ENCODE measurements at regions of chr20 and their contacts with region 1.

Region 1: DNA sequence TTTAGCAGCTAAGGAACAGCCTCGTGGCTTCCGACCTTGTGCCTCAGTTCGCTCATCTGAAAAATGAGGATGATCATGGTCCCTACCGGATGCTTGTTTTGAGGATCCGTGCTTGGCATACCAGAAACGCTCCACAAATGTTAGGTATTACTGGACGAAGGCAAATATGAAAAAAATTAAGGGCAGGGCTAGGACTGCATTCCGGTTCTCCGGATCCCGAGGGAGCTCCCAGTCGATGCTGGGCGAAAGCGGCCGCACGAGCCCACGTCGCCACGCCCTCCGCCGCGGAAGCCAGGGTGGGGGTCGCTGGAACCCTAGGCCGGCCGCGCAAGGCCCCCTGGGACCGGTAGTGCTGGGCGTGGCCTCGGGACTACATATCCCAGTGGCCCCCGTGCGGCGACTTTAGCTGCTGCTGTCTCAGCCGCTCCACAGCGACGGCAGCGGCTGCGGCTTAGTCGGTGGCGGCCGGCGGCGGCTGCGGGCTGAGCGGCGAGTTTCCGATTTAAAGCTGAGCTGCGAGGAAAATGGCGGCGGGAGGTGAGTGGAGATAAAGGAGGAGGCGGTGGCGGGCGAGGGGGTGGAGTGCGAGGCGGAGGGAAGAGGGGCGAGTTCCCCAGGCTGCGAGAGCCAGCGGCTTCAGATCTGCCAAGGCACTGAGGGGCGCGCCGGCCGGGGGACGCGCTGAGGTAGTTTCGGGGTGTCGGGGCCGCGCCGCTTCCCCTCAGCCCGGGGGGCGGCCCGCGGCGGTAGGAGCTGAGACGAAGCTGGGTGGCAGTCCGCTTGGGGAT is at the start of gene NCOA3:
- DNase-seq: peak; percentile 77 to 94 (median 87)
- ATAC-seq: peak; percentile 81
- H3K4me3 ChIP-seq: peak within 1 kb of the TSS; percentile 99
- H3K4me3 Mint-ChIP-seq: peak within 1 kb of the TSS; percentile 100
- H3K27ac ChIP-seq: peak within 1 kb of the TSS; percentile 78 to 85
- H3K27ac Mint-ChIP-seq: peak within 1 kb of the TSS; percentile 94
- H3K4me1 ChIP-seq: peaks cover 25% of the 10 kb centered on the region
- H3K4me1 Mint-ChIP-seq: peaks cover 51% of the 10 kb centered on the region
- H3K27me3 ChIP-seq: no peaks in the 10 kb centered on the region
- H3K27me3 Mint-ChIP-seq: no peaks in the 10 kb centered on the region
- CTCF ChIP-seq: peak; percentile 48
- total RNA-seq, gene NCOA3: 59.9 to 65.4 TPM

Region 2: GRCh38 chr20:46715292-46715756 is 786.4 kb before region 1 on chr20:
- CTCF ChIA-PET with region 1: no interaction called
- POLR2A ChIA-PET with region 1: no interaction called
- intact Hi-C with region 1: no loop called
- DNase-seq: no peak
- ATAC-seq: no peak
- H3K4me3 ChIP-seq: no peak overlapping the region
- H3K4me3 Mint-ChIP-seq: no peak overlapping the region
- H3K27ac ChIP-seq: no peak overlapping the region
- H3K27ac Mint-ChIP-seq: no peak overlapping the region
- H3K4me1 ChIP-seq: no peaks in the 10 kb centered on the region
- H3K4me1 Mint-ChIP-seq: peaks cover under 1% of the 10 kb centered on the region
- H3K27me3 ChIP-seq: peaks cover 22 to 30% of the 10 kb centered on the region in 2 experiments
- H3K27me3 Mint-ChIP-seq: peaks cover 53% of the 10 kb centered on the region
- CTCF ChIP-seq: no peak

Region 3: DNA sequence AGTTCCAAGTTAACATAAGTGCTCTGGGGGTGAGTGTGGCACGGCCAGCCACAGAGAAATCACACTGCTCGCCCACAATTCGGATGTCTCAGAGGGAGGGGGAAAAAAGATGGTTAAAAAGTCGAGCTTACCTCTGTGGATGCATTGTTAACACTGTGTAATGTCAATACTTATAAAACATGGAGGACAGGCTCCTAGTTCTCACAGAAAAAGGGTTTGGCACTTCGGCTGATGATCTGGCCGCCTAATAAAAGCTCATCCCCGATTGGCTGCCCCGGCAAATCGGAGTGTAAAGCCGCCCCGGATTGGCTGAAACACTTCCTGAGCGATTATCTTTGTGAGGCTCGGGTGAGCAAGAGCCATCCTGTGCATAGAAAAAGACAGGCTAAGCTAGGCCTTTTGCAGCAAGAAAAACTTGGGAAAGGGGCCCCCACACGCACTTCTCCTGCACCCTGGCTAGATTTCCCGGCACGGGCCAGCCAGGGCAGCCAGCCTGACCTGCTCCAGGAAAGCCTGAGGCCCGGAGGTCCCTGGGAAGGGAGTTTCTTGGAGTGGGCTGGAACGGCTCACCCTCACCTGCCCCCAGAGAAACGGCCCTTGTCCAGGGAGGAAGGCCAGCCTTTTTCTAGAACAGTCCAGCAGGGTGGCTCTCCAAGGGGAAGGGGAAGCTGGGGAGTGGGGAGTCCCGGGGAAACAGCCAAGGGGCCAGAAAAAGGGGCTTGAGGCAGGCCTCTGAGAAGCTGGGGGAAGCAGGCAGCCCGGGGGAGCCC is 145.0 kb before region 1 on chr20 and contains the start of gene ZMYND8:
- CTCF ChIA-PET with region 1: no interaction called
- POLR2A ChIA-PET with region 1: interaction called, 44 read pairs
- intact Hi-C with region 1: loop called in 1 of 2 experiments (anchors 5 kb)
- DNase-seq: peak; percentile 87 to 100 (median 95)
- ATAC-seq: peak; percentile 88
- H3K4me3 ChIP-seq: peak within 1 kb of the TSS; percentile 61
- H3K4me3 Mint-ChIP-seq: peak within 1 kb of the TSS; percentile 93
- H3K27ac ChIP-seq: peak within 1 kb of the TSS; percentile 83 to 85
- H3K27ac Mint-ChIP-seq: no peak within 1 kb of the TSS
- H3K4me1 ChIP-seq: peaks cover 74% of the 10 kb centered on the region
- H3K4me1 Mint-ChIP-seq: peaks cover 55% of the 10 kb centered on the region
- H3K27me3 ChIP-seq: no peaks in the 10 kb centered on the region
- H3K27me3 Mint-ChIP-seq: no peaks in the 10 kb centered on the region
- CTCF ChIP-seq: no peak
- total RNA-seq, gene ZMYND8: 33.0 to 34.3 TPM

Region 4: GRCh38 chr20:47418061-47418912 is 83.4 kb before region 1 on chr20:
- CTCF ChIA-PET with region 1: no interaction called
- POLR2A ChIA-PET with region 1: interaction called, 8 read pairs
- intact Hi-C with region 1: loop called (anchors 5 kb)
- DNase-seq: no peak
- ATAC-seq: no peak
- H3K4me3 ChIP-seq: no peak overlapping the region
- H3K4me3 Mint-ChIP-seq: no peak overlapping the region
- H3K27ac ChIP-seq: no peak overlapping the region
- H3K27ac Mint-ChIP-seq: no peak overlapping the region
- H3K4me1 ChIP-seq: peaks cover 30% of the 10 kb centered on the region
- H3K4me1 Mint-ChIP-seq: peaks cover 29% of the 10 kb centered on the region
- H3K27me3 ChIP-seq: no peaks in the 10 kb centered on the region
- H3K27me3 Mint-ChIP-seq: no peaks in the 10 kb centered on the region
- CTCF ChIP-seq: no peak

Region 5: GRCh38 chr20:47487175-47487917 is 14.3 kb before region 1 on chr20:
- CTCF ChIA-PET with region 1: interaction called, 5 read pairs
- POLR2A ChIA-PET with region 1: interaction called, 48 read pairs
- intact Hi-C with region 1: loop called in 1 of 2 experiments (anchors 1 kb)
- DNase-seq: peak in 10 of 14 experiments; percentile 3 to 89 (median 31)
- ATAC-seq: peak; percentile 85
- H3K4me3 ChIP-seq: peak overlapping the region; percentile 19
- H3K4me3 Mint-ChIP-seq: peak overlapping the region; percentile 54
- H3K27ac ChIP-seq: peak overlapping the region; percentile 38 to 74
- H3K27ac Mint-ChIP-seq: peak overlapping the region; percentile 71
- H3K4me1 ChIP-seq: peaks cover 28% of the 10 kb centered on the region
- H3K4me1 Mint-ChIP-seq: peaks cover 28% of the 10 kb centered on the region
- H3K27me3 ChIP-seq: no peaks in the 10 kb centered on the region
- H3K27me3 Mint-ChIP-seq: no peaks in the 10 kb centered on the region
- CTCF ChIP-seq: no peak

Region 6: DNA sequence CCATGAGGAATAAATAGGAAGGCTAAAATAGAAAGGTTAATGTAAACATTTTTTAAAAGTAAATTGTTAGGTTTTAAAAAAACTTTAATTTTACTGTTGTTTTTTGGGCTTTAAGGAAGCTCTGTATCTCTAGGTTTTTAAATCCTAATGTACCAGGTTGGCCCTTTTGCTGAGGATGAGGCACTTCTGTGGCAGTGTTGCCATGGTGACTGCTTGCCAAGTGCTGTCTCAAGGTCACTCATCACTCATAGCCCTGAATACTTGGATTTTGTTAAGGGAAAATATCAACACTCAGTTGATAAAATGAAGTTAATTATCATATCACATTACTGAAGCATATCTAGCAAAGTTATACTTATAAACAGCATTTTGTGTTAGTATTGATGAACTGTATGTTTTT is 50.2 kb after region 1 on chr20:
- CTCF ChIA-PET with region 1: interaction called, 3 read pairs
- POLR2A ChIA-PET with region 1: no interaction called
- intact Hi-C with region 1: loop called in 1 of 2 experiments (anchors 10 kb)
- DNase-seq: no peak
- ATAC-seq: no peak
- H3K4me3 ChIP-seq: no peak overlapping the region
- H3K4me3 Mint-ChIP-seq: no peak overlapping the region
- H3K27ac ChIP-seq: no peak overlapping the region
- H3K27ac Mint-ChIP-seq: no peak overlapping the region
- H3K4me1 ChIP-seq: peaks cover 9% of the 10 kb centered on the region
- H3K4me1 Mint-ChIP-seq: peaks cover 46% of the 10 kb centered on the region
- H3K27me3 ChIP-seq: no peaks in the 10 kb centered on the region
- H3K27me3 Mint-ChIP-seq: no peaks in the 10 kb centered on the region
- CTCF ChIP-seq: no peak

Region 7: DNA sequence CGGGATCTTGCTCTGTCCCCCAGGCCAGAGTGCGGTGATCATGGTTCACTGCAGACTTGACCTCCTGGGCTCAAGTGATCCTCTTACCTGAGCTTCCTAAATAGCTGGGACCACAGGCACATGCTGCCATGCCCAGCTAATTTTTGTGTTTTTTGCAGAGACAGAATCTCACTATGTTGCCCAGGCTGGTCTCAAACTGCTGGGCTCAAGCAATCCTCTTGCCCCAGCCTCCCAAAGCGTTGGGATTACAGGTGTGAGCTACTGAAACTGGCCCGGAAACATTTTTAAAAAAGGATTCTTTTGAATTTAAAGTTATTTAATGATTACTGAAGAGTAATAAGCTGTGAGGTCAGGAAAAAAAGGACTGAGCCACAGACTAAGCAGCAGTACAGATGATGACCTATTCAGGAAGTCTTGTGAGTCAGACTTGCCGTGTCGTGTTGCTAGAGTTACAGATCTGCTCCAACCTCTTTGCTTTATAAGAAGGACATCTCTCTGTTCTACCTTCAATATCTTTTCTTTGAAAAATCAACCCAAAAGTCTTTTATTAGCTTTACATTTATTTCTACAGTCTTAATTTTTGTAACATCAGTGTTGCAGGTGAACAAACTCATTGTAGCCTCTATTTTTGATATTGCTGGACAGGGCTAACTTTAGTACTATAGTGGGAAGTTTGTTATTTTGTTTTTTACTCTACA is 108.7 kb after region 1 on chr20:
- CTCF ChIA-PET with region 1: interaction called, 6 read pairs
- POLR2A ChIA-PET with region 1: no interaction called
- intact Hi-C with region 1: loop called in 1 of 2 experiments (anchors 5 kb)
- DNase-seq: peak in 13 of 14 experiments; percentile 31 to 75 (median 46)
- ATAC-seq: peak; percentile 89
- H3K4me3 ChIP-seq: no peak overlapping the region
- H3K4me3 Mint-ChIP-seq: peak overlapping the region; percentile 22
- H3K27ac ChIP-seq: peak overlapping the region; percentile 46 to 65
- H3K27ac Mint-ChIP-seq: peak overlapping the region; percentile 81
- H3K4me1 ChIP-seq: peaks cover 27% of the 10 kb centered on the region
- H3K4me1 Mint-ChIP-seq: peaks cover 72% of the 10 kb centered on the region
- H3K27me3 ChIP-seq: no peaks in the 10 kb centered on the region
- H3K27me3 Mint-ChIP-seq: no peaks in the 10 kb centered on the region
- CTCF ChIP-seq: no peak

Region 8: DNA sequence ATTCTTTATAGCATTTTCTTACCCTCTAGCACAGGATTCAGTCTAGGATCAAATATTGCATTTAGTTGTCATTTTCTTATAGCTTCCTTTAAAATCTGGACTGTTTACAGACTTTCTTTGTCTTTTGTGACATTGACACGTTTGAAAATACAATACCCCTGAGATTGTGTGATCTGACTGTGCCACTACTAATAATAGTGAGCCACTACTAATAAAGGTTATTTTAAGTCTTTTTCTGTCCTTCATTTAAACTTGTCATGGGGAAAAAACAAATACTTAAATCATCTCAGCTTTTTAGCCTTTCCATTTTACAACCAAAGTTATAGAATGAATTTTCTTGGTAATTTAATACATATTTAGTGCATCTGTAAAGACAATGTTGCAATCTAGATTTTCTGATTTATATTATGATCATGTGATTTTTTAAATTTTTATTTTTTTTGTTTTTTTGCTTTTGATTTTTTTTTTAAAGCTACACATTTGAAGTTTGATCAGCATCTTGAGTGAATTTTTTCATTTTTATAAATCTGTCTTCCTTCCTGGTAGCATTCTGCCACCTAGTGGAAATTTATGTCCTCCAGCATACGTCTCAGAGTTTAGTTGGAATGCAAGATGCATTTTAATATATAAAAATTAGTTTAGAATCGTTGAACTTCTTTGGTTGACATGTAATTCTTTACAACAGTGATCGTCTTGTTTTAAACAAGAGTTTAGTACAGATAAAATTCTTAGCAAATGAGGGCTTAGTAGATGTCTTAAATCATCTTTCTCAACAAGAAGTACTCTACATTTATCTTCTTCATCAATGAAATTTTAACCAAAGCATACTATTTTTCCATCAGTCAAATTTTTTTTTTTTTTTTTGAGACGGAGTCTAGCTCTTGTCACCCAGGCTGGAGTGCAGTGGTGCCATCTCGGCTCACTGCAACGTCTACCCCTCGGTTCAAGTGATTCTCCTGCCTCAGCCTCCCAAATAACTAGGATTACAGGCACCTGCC is 119.4 kb after region 1 on chr20:
- CTCF ChIA-PET with region 1: interaction called, 13 read pairs
- POLR2A ChIA-PET with region 1: interaction called, 4 read pairs
- intact Hi-C with region 1: loop called in 1 of 2 experiments (anchors 5 kb)
- DNase-seq: peak in 4 of 14 experiments; percentile 27 to 73 (median 68)
- ATAC-seq: peak; percentile 52
- H3K4me3 ChIP-seq: no peak overlapping the region
- H3K4me3 Mint-ChIP-seq: no peak overlapping the region
- H3K27ac ChIP-seq: no peak overlapping the region
- H3K27ac Mint-ChIP-seq: peak overlapping the region; percentile 25
- H3K4me1 ChIP-seq: no peaks in the 10 kb centered on the region
- H3K4me1 Mint-ChIP-seq: peaks cover 23% of the 10 kb centered on the region
- H3K27me3 ChIP-seq: no peaks in the 10 kb centered on the region
- H3K27me3 Mint-ChIP-seq: no peaks in the 10 kb centered on the region
- CTCF ChIP-seq: peak; percentile 85

Region 9: DNA sequence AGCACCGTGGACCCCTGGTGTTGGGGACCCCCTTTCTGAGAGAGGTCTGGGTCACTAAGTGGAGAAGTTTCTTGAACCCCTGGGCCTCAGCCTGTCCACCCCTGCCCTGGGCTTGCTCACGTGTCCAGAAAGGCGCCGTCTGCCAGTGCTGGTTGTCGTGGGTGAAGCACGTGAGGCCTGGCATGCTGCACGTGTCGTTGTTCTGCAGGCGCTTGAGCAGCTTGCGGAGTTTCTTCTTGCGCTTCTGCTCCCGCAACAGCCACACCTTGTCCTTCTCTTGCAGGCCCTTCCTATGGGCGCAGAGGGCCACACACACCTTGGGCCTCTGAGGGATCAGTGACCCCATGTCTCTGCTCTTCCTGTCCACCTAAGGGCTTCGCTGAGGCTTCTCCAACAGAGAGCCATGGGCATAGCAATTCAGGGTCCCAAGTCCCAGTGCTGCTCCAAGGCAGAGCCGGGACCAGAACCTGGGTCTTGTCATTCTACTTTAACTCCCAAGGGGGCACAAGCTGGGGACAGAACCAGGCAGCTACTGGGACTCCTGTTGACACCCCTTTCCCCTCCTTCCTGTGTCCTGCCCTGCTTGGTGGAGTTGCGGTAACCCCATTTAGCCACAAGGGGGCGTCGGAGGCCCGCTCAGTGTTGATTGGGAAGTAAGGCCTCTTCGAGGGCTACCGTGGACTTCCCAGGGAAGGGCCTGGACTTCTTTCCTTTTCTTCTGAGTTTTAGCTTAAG is 161.8 kb after region 1 on chr20:
- CTCF ChIA-PET with region 1: no interaction called
- POLR2A ChIA-PET with region 1: no interaction called
- intact Hi-C with region 1: no loop called
- DNase-seq: peak; percentile 54 to 82 (median 68)
- ATAC-seq: peak; percentile 82
- H3K4me3 ChIP-seq: no peak overlapping the region
- H3K4me3 Mint-ChIP-seq: no peak overlapping the region
- H3K27ac ChIP-seq: no peak overlapping the region
- H3K27ac Mint-ChIP-seq: peak overlapping the region; percentile 32
- H3K4me1 ChIP-seq: peaks cover 8% of the 10 kb centered on the region
- H3K4me1 Mint-ChIP-seq: no peaks in the 10 kb centered on the region
- H3K27me3 ChIP-seq: no peaks in the 10 kb centered on the region
- H3K27me3 Mint-ChIP-seq: no peaks in the 10 kb centered on the region
- CTCF ChIP-seq: peak; percentile 92